ENCODE measurements at regions of chr2 and their contacts with region 1.

Region 1: DNA sequence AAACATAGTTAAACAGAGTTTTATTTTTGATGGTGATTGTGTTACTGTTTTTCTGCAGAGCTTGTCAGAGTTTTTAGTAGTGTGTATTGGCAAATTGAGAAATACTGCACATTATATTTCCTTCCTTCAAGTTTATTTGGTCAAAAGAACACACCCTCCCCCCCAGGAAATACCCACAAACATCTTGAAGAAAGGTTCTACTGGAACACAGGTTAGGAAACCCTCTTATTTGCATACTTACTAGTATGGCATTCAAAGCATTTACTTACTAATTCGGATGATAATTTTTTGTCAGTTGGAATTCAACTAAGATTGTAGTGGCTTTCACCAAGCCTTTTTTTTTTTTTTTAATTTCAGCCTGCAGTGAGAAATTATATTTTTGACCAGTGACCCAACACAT is 9.1 kb downstream of the CAB39 start:
- DNase-seq: no peak
- ATAC-seq: peak; percentile 78
- H3K4me3 ChIP-seq: no peak overlapping the region
- H3K27ac ChIP-seq: no peak overlapping the region
- H3K4me1 ChIP-seq: peaks cover 63% of the 10 kb centered on the region
- H3K27me3 ChIP-seq: no peaks in the 10 kb centered on the region
- CTCF ChIP-seq: no peak

Region 2: GRCh38 chr2:230781130-230781797 is 59.6 kb after region 1 on chr2:
- intact Hi-C with region 1: loop called (anchors 10 kb)
- DNase-seq: no peak
- ATAC-seq: peak; percentile 92
- H3K4me3 ChIP-seq: no peak overlapping the region
- H3K27ac ChIP-seq: peak overlapping the region; percentile 43
- H3K4me1 ChIP-seq: peaks cover 15% of the 10 kb centered on the region
- H3K27me3 ChIP-seq: no peaks in the 10 kb centered on the region
- CTCF ChIP-seq: no peak

Region 3: DNA sequence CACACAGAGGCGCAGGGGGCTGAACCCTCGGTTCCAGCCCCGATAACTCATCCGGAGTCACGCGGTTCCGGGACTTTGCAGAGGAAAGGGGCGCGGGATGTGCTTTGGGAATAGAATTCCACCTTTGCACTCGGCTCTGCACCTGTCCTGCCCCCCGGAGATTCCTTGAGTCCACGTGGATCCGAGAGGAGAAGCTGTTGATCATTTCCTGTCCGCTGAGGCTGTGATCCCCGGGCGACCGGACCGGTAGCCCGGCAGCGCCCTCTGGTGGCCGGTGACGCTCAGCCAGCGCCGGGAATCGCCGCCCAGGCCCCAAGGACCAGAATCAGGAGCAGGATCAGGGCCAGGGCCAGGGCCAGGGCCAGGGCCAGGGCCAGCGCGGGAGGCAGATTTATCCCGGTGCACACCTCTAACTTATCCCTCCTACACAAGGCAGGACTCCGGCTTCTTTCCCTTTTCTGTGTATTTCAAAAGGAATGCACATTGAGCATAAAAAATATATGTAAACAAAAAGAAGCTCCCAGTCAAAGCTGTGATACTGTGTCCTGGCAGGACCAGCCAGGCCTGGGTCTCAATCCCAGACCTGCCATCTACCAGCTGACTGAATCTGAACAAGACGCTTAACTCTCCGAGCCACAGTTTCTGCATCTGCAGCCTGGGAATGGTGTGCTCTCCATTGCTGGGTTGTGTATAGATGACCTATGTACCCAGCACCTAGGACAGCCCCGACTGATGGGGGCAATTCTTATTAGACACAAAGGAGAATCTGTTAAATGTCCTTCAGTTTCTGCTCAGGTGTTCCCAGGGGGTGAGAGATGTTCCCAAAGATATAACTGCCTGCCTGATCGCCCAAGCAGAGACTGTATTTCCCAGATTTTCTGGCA is 265.7 kb after region 1 on chr2:
- intact Hi-C with region 1: no loop called
- DNase-seq: peak; percentile 90
- ATAC-seq: peak; percentile 93
- H3K4me3 ChIP-seq: peak overlapping the region; percentile 32
- H3K27ac ChIP-seq: no peak overlapping the region
- H3K4me1 ChIP-seq: peaks cover 3% of the 10 kb centered on the region
- H3K27me3 ChIP-seq: peaks cover 23% of the 10 kb centered on the region
- CTCF ChIP-seq: peak; percentile 92

Region 4: GRCh38 chr2:231745303-231746038 is 1023.8 kb after region 1 on chr2:
- intact Hi-C with region 1: no loop called
- DNase-seq: no peak
- ATAC-seq: no peak
- H3K4me3 ChIP-seq: no peak overlapping the region
- H3K27ac ChIP-seq: no peak overlapping the region
- H3K4me1 ChIP-seq: no peaks in the 10 kb centered on the region
- H3K27me3 ChIP-seq: no peaks in the 10 kb centered on the region
- CTCF ChIP-seq: no peak

Measured in upper lobe of right lung (tissue), 1 donor.